ENCODE measurements at regions of chr17 and their contacts with region 1.

Region 1: DNA sequence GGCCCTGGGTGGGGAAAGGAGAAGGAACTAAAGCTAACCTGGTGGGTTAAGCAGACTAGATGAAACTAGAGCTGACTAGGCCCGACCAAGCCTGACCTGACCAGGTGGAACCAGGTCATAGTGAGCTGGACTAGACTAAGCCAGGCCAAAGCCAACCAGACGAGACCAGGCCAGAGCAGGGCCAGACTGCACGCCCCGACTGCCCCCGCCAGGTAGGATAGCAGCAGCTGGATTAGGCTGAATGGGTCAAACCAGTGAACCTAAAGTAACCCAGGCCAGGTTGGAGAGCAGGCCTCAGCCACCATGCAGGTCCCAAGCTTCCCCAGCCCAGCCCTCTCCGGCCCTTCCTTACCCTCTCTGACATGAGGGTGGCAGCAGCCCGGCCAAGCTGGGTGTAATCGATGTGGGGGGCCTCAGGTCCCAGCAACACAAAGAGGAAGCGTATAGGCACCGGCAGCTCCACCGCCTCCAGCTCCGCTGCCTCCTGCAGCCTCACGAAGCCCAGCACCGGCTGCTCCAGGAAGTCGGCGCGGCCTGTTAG is 9.1 kb downstream of the SLC4A1 start:
- DNase-seq: no peak
- H3K4me3 ChIP-seq: no peak overlapping the region
- CTCF ChIP-seq: no peak

Region 2: GRCh38 chr17:44199553-44200477 is 59.1 kb before region 1 on chr17 and contains the start of gene ATXN7L3:
- in situ Hi-C with region 1: loop called (anchors 10 kb)
- DNase-seq: peak; percentile 93
- H3K4me3 ChIP-seq: peak within 1 kb of the TSS; percentile 76
- CTCF ChIP-seq: no peak